Activated CD4-positive, alpha-beta T cell treated with anti-CD3 and anti-CD28 coated beads for 36 hours (primary cell): ENCODE measurements at regions of chr1 and their contacts with region 1.

Region 1: GRCh38 chr1:10694633-10695627 is 101.5 kb downstream of the CASZ1 start:
- DNase-seq: peak; percentile 83
- ATAC-seq: peak; percentile 55
- H3K4me3 Mint-ChIP-seq: peak overlapping the region; percentile 57
- H3K27ac Mint-ChIP-seq: no peak overlapping the region
- H3K4me1 Mint-ChIP-seq: peaks cover 36% of the 10 kb centered on the region
- H3K27me3 Mint-ChIP-seq: peaks cover 2% of the 10 kb centered on the region

Region 2: GRCh38 chr1:9651565-9652378 is 1043.2 kb before region 1 on chr1 and contains the start of gene PIK3CD:
- CTCF ChIA-PET with region 1: no interaction called
- POLR2A ChIA-PET with region 1: no interaction called
- intact Hi-C with region 1: loop called in 1 of 2 experiments (anchors 10 kb)
- DNase-seq: peak; percentile 69
- ATAC-seq: peak; percentile 24
- H3K4me3 Mint-ChIP-seq: peak within 1 kb of the TSS; percentile 98
- H3K27ac Mint-ChIP-seq: peak within 1 kb of the TSS; percentile 99
- H3K4me1 Mint-ChIP-seq: peaks cover 51% of the 10 kb centered on the region
- H3K27me3 Mint-ChIP-seq: no peaks in the 10 kb centered on the region
- total RNA-seq, gene PIK3CD: 96.4 to 114 TPM

Region 3: GRCh38 chr1:10398734-10399623 is 296.0 kb before region 1 on chr1 and contains the start of gene PGD:
- CTCF ChIA-PET with region 1: no interaction called
- POLR2A ChIA-PET with region 1: no interaction called
- intact Hi-C with region 1: loop called in 1 of 2 experiments (anchors 5 kb)
- DNase-seq: peak; percentile 99
- ATAC-seq: peak; percentile 97
- H3K4me3 Mint-ChIP-seq: peak within 1 kb of the TSS; percentile 86
- H3K27ac Mint-ChIP-seq: peak within 1 kb of the TSS; percentile 78
- H3K4me1 Mint-ChIP-seq: peaks cover 31% of the 10 kb centered on the region
- H3K27me3 Mint-ChIP-seq: no peaks in the 10 kb centered on the region
- total RNA-seq, gene PGD: 91.6 to 93.7 TPM

Region 4: GRCh38 chr1:10507111-10507879 is 187.6 kb before region 1 on chr1:
- CTCF ChIA-PET with region 1: interaction called, 4 read pairs
- POLR2A ChIA-PET with region 1: no interaction called
- intact Hi-C with region 1: loop called (anchors 1 kb)
- DNase-seq: peak; percentile 73
- ATAC-seq: peak; percentile 47
- H3K4me3 Mint-ChIP-seq: no peak overlapping the region
- H3K27ac Mint-ChIP-seq: no peak overlapping the region
- H3K4me1 Mint-ChIP-seq: peaks cover 51% of the 10 kb centered on the region
- H3K27me3 Mint-ChIP-seq: no peaks in the 10 kb centered on the region

Region 5: DNA sequence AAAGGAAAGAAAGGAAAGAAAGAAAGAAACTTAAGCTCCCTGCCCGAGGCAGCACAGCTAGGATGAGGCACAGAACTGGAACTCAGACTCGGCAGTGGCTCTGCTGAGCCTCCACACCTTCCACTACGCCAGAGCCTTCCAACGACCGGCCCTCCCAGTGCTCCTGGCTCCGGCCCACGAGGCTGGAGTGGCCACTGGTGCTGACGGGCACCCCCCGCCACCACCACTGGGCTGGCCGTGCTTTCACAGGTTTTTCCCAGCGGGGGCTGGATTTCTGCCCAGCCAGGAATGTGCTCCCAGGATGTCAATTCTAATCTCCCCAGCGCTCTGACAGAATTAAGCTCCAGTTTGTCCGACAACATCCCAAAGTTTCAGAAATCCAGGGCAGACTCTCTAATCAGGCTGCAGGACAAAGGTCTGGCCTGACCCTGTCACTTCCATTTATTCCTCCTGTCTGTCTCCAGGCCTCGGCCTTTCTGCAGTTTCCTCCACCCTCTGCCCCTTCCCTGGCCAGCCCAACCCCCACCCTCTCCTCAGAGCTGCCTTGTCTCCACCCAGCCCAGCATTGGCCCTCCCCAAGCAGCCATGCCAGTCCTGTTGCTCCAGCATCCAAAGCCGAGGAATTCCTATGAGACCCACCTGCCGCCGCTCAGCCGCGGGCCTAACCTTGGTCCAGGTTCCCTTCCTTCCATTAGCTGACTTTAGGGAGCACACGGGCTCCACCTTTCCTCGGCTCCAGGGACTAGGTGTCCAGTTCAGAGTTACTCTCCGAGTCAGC is 19.6 kb after region 1 on chr1:
- CTCF ChIA-PET with region 1: no interaction called
- POLR2A ChIA-PET with region 1: no interaction called
- intact Hi-C with region 1: no loop called
- DNase-seq: no peak
- ATAC-seq: no peak
- H3K4me3 Mint-ChIP-seq: no peak overlapping the region
- H3K27ac Mint-ChIP-seq: no peak overlapping the region
- H3K4me1 Mint-ChIP-seq: no peaks in the 10 kb centered on the region
- H3K27me3 Mint-ChIP-seq: no peaks in the 10 kb centered on the region

Region 6: GRCh38 chr1:10867138-10867721 is 172.3 kb after region 1 on chr1:
- CTCF ChIA-PET with region 1: interaction called, 4 read pairs
- POLR2A ChIA-PET with region 1: no interaction called
- intact Hi-C with region 1: loop called (anchors 1 kb)
- DNase-seq: peak; percentile 77
- ATAC-seq: peak; percentile 84
- H3K4me3 Mint-ChIP-seq: peak overlapping the region; percentile 43
- H3K27ac Mint-ChIP-seq: no peak overlapping the region
- H3K4me1 Mint-ChIP-seq: peaks cover 12% of the 10 kb centered on the region
- H3K27me3 Mint-ChIP-seq: peaks cover 51% of the 10 kb centered on the region

Region 7: DNA sequence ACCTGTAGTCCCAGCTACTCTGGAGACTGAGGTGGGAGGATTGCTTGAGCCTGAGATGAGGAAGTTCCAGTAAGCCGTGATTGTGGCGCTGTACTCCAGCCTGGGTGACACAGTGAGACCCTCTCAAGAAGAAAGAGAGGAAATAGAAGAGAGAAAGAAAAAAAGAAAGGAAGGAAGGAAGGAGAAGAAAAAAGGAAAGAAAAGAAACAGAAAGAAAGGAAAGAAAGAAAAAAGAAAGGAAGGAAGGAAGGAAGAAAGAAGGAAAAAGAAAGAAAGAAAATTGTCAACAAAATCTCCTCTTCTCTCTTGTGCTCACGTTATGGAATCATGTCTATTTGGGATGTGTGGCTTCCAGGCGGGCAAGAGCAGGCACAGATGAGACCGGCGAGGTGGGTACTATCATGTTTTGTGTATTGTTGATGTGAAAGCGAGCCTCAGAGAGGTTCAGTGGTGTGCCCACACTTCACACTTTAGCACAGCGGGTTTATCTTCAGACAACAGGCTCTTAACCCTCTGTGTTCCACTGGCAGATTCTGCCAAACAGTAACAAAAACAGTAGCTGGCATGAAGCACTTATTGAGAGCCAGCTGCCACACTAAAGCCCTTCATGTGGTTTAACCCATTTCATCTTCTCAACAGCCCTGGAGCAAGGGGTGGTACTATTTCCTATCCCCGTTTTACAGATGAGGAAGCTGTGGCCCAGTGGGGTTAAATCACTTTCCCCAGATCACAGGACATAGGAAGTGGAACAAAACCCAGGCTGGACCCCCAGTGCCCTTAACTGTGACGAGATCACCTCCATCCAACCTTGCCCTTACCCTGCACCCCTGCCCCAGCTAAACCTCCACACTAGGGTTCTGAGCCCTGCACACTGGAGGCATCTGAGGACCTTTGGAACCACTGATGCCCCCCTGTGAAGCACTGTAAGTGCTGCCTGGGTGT is 222.9 kb after region 1 on chr1:
- CTCF ChIA-PET with region 1: no interaction called
- POLR2A ChIA-PET with region 1: no interaction called
- intact Hi-C with region 1: no loop called
- DNase-seq: no peak
- ATAC-seq: peak; percentile 40
- H3K4me3 Mint-ChIP-seq: peak overlapping the region; percentile 16
- H3K27ac Mint-ChIP-seq: no peak overlapping the region
- H3K4me1 Mint-ChIP-seq: peaks cover 35% of the 10 kb centered on the region
- H3K27me3 Mint-ChIP-seq: peaks cover 31% of the 10 kb centered on the region

Region 8: GRCh38 chr1:11012250-11013171 is 317.6 kb after region 1 on chr1 and contains the start of gene TARDBP:
- CTCF ChIA-PET with region 1: no interaction called
- POLR2A ChIA-PET with region 1: no interaction called
- intact Hi-C with region 1: loop called in 1 of 2 experiments (anchors 1 kb)
- DNase-seq: peak; percentile 94
- ATAC-seq: peak; percentile 89
- H3K4me3 Mint-ChIP-seq: peak within 1 kb of the TSS; percentile 93
- H3K27ac Mint-ChIP-seq: peak within 1 kb of the TSS; percentile 99
- H3K4me1 Mint-ChIP-seq: peaks cover 30% of the 10 kb centered on the region
- H3K27me3 Mint-ChIP-seq: no peaks in the 10 kb centered on the region
- total RNA-seq, gene TARDBP: 180 to 190 TPM